ENCODE measurements at regions of chr1 and their contacts with region 1.

Region 1: DNA sequence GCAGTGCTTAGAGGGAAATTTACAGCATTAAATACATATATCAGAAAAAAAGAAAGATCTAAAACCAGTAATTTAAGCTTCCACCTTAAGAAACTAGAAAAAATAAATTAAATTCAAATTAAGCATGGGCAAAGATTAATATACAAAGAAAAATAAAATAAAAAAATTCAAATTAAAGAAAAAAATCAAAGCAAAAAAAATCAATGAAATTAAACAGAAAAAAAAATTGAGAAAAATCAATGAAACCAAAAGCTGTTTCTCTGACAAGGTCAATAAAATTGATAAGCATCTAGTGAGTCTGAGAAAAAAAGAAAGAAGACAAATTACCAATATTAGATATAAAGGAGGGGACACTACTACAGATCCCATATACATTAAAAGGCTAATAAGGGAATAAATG is 26.0 kb downstream of the GNG12 start:
- DNase-seq: no peak
- ATAC-seq: no peak
- H3K4me3 ChIP-seq: no peak overlapping the region
- H3K27ac ChIP-seq: no peak overlapping the region
- H3K4me1 ChIP-seq: peaks cover 12% of the 10 kb centered on the region; the same call in 1 of the 2 replicates
- H3K27me3 ChIP-seq: no peaks in the 10 kb centered on the region
- CTCF ChIP-seq: no peak

Region 2: GRCh38 chr1:67536957-67537666 is 270.2 kb before region 1 on chr1:
- CTCF ChIA-PET with region 1: no interaction called
- POLR2A ChIA-PET with region 1: no interaction called
- in situ Hi-C with region 1: no loop called
- intact Hi-C with region 1: no loop called
- DNase-seq: no peak
- ATAC-seq: no peak
- H3K4me3 ChIP-seq: no peak overlapping the region
- H3K27ac ChIP-seq: peak overlapping the region; percentile 62
- H3K4me1 ChIP-seq: peaks cover 18% of the 10 kb centered on the region
- H3K27me3 ChIP-seq: no peaks in the 10 kb centered on the region
- CTCF ChIP-seq: no peak

Region 3: GRCh38 chr1:67821263-67821662 is 14.0 kb after region 1 on chr1:
- CTCF ChIA-PET with region 1: no interaction called
- POLR2A ChIA-PET with region 1: interaction called, 4 read pairs
- in situ Hi-C with region 1: no loop called
- intact Hi-C with region 1: loop called (anchors 2 kb)
- DNase-seq: no peak
- ATAC-seq: no peak
- H3K4me3 ChIP-seq: no peak overlapping the region
- H3K27ac ChIP-seq: no peak overlapping the region
- H3K4me1 ChIP-seq: peaks cover 11% of the 10 kb centered on the region
- H3K27me3 ChIP-seq: no peaks in the 10 kb centered on the region
- CTCF ChIP-seq: no peak

Region 4: DNA sequence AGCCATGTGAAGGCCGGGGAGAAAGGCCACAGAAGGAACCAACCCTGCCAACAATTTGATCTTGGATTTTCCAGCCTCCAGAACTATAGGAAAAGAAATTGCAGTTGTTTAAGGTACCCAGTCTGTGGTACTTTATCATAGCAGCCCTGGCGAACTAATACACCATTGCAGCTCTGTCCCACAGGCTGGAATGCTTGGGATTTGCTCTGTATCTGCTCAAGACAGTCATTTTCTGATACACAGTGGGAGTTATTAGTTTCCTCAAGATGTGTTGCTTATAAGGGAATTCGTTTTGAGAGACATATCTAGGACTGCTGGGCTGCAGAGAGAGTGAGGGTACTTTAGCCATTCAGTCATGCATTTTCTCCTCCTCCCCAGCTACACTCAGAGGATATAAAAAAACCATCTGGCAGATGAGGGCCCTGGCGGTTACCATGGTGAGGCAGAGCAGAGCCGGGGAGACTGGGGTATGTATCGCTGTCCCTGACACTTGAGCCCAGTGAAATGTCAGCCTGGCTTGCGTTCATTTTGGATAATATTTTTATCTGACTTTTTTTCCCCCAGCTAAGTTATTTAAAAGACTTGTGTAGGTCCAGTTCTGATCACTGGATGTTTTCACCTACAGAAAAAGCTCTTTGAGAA is 138.6 kb after region 1 on chr1:
- CTCF ChIA-PET with region 1: no interaction called
- POLR2A ChIA-PET with region 1: no interaction called
- in situ Hi-C with region 1: no loop called
- intact Hi-C with region 1: no loop called
- DNase-seq: no peak
- ATAC-seq: no peak
- H3K4me3 ChIP-seq: no peak overlapping the region
- H3K27ac ChIP-seq: no peak overlapping the region
- H3K4me1 ChIP-seq: no peaks in the 10 kb centered on the region
- H3K27me3 ChIP-seq: peaks cover 4% of the 10 kb centered on the region; the same call in 1 of the 2 replicates
- CTCF ChIP-seq: no peak